ENCODE measurements at regions of chr10 and their contacts with region 1.

Region 1: DNA sequence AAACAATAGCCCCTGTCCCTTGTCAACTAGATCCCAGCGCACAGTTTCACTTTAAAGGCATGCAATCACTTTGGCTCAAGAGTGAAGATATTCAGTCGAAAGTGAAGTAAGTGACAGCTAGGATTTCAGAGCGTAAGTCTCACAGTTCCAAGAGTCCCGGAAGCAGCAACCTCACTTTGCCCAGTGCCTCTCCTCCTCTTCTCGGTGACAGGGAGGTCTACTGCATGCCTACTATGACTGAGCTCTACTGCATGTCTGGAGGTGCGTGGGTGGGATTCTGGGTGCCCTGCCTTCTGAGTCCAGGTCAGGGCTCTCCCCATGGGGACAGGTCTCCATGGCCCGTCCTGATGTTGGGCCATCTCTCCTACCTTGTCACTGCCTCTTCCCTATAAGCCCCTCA is 17.0 kb downstream of the PRKCQ start:
- DNase-seq: no peak
- ATAC-seq: peak; percentile 67 to 78
- H3K4me3 Mint-ChIP-seq: peak overlapping the region; percentile 55 to 86 (median 76)
- H3K27ac Mint-ChIP-seq: peak overlapping the region; percentile 76 to 95 (median 91)
- H3K4me1 Mint-ChIP-seq: peaks cover 46 to 96% (median 93%) of the 10 kb centered on the region in 4 donors
- H3K27me3 Mint-ChIP-seq: no peaks in the 10 kb centered on the region

Region 2: DNA sequence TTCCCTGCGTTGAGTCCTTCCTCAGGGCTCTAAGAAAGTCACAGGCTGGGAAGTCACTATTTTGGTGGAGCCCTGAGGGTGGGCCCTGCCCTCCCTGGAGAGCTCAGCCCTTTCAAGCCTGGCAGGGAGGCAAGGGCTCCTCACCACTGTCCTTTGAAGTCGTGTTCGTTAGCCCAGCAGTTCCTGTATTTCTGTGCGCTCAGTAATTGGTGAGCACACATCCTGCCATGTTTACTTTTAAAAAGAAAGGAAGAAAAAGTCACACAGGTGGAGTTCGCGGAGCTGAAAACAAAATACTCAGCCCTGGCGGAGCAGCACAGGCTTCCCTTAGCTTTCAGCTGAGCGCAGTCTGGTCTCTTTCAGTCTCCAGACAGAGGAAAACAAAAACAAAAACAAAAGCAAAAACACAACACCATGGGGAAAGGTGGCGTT is 20.1 kb before region 1 on chr10:
- POLR2A ChIA-PET with region 1: interaction called, 15 read pairs
- DNase-seq: peak in 9 of 10 donors; percentile 32 to 82 (median 65)
- ATAC-seq: peak; percentile 88 to 90
- H3K4me3 Mint-ChIP-seq: peak overlapping the region; percentile 83 to 98 (median 94)
- H3K27ac Mint-ChIP-seq: peak overlapping the region; percentile 95 to 100 (median 99)
- H3K4me1 Mint-ChIP-seq: peaks cover 42 to 84% (median 80%) of the 10 kb centered on the region in 4 donors
- H3K27me3 Mint-ChIP-seq: no peaks in the 10 kb centered on the region